Head of caudate nucleus (tissue), 42 donors: ENCODE measurements at regions of chr18 and their contacts with region 1.

Region 1: GRCh38 chr18:59823596-59824195 is 76.1 kb upstream of the PMAIP1 start:
- DNase-seq: peak in 41 of 42 donors; percentile 13 to 86 (median 72)

Region 2: DNA sequence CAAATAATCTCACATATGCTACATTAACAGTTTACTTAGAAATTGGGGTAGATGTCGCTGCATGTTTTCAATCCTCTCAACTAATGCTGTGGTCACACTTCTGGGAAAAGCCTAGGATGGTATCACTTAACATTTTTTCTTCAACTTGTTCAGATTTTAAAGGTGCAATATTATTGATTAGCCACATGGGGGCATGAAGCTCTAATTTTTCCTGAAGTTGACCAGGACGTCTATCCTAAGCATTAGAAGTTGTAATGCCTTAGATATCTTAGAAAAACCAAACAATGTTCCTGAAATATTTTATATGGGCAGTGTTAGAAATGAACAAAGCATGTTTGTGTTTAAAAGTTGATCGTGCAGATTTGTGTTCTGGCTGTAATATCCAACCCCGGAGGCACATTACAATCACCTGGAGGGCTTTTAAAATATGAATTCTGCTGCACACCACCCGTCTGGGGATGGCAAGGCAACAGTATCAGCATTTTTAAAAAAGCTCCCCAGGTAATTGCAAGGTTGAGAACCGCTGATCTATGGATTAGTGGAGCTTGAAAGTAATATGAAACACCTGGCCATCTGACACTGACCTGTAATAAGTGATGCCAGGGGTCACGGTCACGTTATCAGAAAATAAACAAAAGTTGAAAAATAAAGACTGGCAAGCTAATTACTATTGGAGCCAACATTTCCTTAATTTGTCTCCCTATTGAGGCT is 364.2 kb before region 1 on chr18:
- intact Hi-C with region 1: loop called (anchors 5 kb)
- DNase-seq: peak in 1 of 42 donors; percentile 11

Region 3: GRCh38 chr18:59918320-59918755 is 94.6 kb after region 1 on chr18:
- intact Hi-C with region 1: no loop called
- DNase-seq: peak in 1 of 42 donors; percentile 11